Mammary epithelial cell (primary cell): ENCODE measurements at regions of chr4 and their contacts with region 1.

Region 1: DNA sequence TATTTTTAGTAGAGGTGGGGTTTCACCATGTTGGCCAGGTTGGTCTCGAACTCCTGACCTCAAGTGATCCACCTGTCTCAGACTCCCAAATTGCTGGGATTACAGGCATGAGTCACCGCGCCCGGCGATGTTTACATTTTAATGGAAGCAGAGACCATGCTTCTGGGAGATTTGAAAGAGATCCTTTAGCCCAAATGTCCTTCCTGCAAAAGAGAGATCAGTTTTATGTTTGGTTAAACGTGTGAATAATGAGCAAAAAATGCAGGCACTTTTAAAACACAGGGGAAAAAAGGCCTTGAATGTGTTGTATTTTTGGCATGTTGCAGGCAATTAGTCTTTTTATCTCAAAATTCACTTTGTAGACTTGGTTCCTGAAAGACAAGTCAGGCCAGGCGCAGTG is 95.8 kb upstream of the ELOVL6 start:
- DNase-seq: no peak
- H3K4me3 ChIP-seq: no peak overlapping the region
- H3K27ac ChIP-seq: no peak overlapping the region
- H3K4me1 ChIP-seq: no peaks in the 10 kb centered on the region
- H3K27me3 ChIP-seq: peaks cover 2% of the 10 kb centered on the region
- CTCF ChIP-seq: no peak

Region 2: GRCh38 chr4:110354460-110354859 is 60.3 kb after region 1 on chr4:
- CTCF ChIA-PET with region 1: no interaction called
- dilution Hi-C with region 1: loop called (anchors 5 kb)
- in situ Hi-C with region 1: no loop called
- intact Hi-C with region 1: no loop called
- DNase-seq: no peak
- H3K4me3 ChIP-seq: no peak overlapping the region
- H3K27ac ChIP-seq: no peak overlapping the region
- H3K4me1 ChIP-seq: no peaks in the 10 kb centered on the region
- H3K27me3 ChIP-seq: peaks cover 2% of the 10 kb centered on the region
- CTCF ChIP-seq: no peak